ENCODE measurements at regions of chr1 and their contacts with region 1.

Region 1: DNA sequence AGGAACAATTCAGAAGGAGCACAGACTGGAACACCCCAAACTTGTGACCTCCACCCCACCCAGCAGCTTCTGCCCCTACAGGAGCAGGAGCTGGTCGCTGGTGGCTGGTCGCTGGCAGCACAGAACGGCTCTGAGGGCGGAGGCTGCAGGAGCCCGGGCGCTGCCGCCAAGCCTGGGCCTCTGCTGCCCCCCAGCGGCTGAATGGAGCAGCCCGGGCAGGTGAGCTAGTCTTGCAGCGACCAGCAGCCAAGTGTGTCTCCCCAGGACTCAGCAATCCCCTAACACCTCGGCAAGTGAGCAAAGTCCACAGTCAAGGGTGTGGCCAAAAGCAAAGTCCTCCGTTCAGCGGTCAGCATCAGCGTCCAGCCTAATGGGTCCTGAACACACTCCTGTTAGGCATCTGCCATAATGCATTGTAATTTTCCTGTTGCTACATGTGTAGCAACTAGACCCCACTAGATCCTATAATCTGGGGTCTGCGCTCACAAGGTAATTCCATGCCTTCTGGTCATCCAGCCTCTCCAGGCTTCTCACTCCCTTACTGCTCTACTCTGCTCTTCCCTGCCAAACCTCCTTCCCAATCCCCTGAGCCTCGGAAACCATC is 12.1 kb upstream of the GJB5 start:
- DNase-seq: peak; percentile 84
- H3K4me3 ChIP-seq: no peak overlapping the region
- H3K27ac ChIP-seq: no peak overlapping the region
- H3K4me1 ChIP-seq: no peaks in the 10 kb centered on the region
- H3K27me3 ChIP-seq: no peaks in the 10 kb centered on the region
- CTCF ChIP-seq: peak; percentile 95

Region 2: DNA sequence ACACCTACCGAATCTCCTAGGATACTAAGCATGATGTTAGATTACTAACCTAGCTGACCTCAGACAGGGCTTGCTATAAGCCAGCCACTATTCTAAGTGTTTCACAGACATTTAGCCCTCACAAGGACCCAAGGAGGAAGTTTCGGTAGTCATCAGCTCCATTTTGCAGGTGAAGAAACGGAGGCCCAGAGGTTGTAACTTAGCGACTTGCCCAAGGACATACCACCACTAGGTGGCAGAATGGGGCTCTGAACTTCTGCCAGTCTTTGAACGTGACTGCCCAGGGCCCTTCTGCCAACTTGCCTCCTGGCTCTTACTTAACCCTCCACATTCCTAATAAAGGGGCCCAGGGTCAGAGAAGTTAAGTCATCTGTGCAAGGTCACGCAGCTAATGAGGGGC is 282.6 kb before region 1 on chr1:
- intact Hi-C with region 1: loop called (anchors 5 kb)
- DNase-seq: peak; percentile 60
- H3K4me3 ChIP-seq: no peak overlapping the region
- H3K27ac ChIP-seq: no peak overlapping the region
- H3K4me1 ChIP-seq: no peaks in the 10 kb centered on the region
- H3K27me3 ChIP-seq: no peaks in the 10 kb centered on the region
- CTCF ChIP-seq: peak; percentile 54

Region 3: DNA sequence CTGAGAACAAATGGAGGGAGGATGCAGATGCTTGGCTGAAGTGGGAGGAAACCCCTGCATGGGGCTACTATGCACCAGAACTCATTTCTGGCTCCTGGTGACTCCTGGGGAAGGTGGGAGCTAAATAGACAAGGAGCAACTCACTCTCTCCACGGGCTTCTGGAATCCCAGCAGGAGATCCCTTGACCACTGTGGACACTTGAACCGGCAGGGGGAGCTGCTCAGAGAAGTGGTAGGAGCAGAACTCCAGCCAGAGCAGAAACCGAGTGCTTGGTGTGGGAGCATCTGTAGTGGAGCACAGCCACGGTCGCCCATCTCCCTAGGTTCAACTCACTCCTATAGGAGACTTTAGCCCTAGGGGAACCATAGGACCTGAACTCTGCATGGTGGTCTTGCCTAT is 193.6 kb before region 1 on chr1:
- intact Hi-C with region 1: loop called (anchors 5 kb)
- DNase-seq: peak; percentile 62
- H3K4me3 ChIP-seq: no peak overlapping the region
- H3K27ac ChIP-seq: no peak overlapping the region
- H3K4me1 ChIP-seq: no peaks in the 10 kb centered on the region
- H3K27me3 ChIP-seq: no peaks in the 10 kb centered on the region
- CTCF ChIP-seq: no peak

Measured in colonic mucosa (tissue), 4 donors.